Upper lobe of right lung (tissue), 1 donor: ENCODE measurements at regions of chr4 and their contacts with region 1.

Region 1: GRCh38 chr4:113555868-113556267 is 205.7 kb downstream of the CAMK2D start:
- DNase-seq: peak; percentile 68
- ATAC-seq: peak; percentile 90
- H3K4me3 ChIP-seq: peak overlapping the region; percentile 15
- H3K27ac ChIP-seq: peak overlapping the region; percentile 82
- H3K4me1 ChIP-seq: peaks cover 5% of the 10 kb centered on the region
- H3K27me3 ChIP-seq: no peaks in the 10 kb centered on the region
- CTCF ChIP-seq: no peak

Region 2: GRCh38 chr4:113316879-113317278 is 239.0 kb before region 1 on chr4:
- intact Hi-C with region 1: no loop called
- DNase-seq: no peak
- ATAC-seq: no peak
- H3K4me3 ChIP-seq: no peak overlapping the region
- H3K27ac ChIP-seq: no peak overlapping the region
- H3K4me1 ChIP-seq: no peaks in the 10 kb centered on the region
- H3K27me3 ChIP-seq: no peaks in the 10 kb centered on the region
- CTCF ChIP-seq: no peak

Region 3: DNA sequence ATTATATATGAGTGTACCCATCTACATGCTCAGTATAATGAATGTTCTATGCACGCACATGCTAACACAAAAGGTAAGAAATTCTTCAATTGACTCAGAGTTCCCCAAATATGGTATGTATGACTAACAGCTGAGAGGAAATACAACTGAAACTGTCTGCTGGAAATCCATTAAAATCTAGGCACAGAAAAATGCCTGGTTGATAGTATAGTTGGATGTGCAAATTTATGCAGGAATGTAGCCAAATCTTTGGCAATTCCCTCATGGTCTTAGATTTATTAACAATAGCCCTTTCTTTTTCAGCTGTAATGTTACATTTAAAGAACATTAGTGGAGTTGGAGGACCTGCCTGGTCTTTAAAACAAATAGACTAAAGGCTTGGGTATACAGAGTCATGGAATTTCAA is 200.1 kb after region 1 on chr4:
- intact Hi-C with region 1: loop called (anchors 10 kb)
- DNase-seq: no peak
- ATAC-seq: no peak
- H3K4me3 ChIP-seq: no peak overlapping the region
- H3K27ac ChIP-seq: no peak overlapping the region
- H3K4me1 ChIP-seq: peaks cover 31% of the 10 kb centered on the region
- H3K27me3 ChIP-seq: no peaks in the 10 kb centered on the region
- CTCF ChIP-seq: no peak

Region 4: DNA sequence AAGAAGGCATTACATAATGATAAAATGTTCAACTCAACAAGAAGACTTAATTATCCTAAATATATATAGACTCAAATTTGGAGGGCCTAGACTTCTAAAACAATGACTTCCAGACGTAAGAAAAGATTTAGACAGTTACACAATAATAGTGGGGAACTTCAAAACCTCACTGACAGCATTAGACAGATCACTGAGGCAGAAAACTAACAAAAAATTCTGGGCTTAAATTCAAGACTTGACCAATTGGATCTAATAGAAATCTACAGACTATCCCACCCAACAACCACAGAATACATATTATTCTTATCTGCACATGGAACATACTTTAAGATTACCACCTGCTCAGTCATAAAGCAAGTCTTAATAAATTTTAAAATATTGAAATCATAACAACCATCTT is 516.9 kb after region 1 on chr4:
- intact Hi-C with region 1: no loop called
- DNase-seq: no peak
- ATAC-seq: no peak
- H3K4me3 ChIP-seq: no peak overlapping the region
- H3K27ac ChIP-seq: no peak overlapping the region
- H3K4me1 ChIP-seq: no peaks in the 10 kb centered on the region
- H3K27me3 ChIP-seq: no peaks in the 10 kb centered on the region
- CTCF ChIP-seq: no peak